Activated T-helper 1 cell treated with anti-CD3 and anti-CD28 coated beads, Interleukin-12 subunit alpha, Interleukin-12 subunit beta, Interleukin-2, Interleukin-4 antibody, amounts not matched to agents 30 ng/mL and 10 ng/mL and 1 ng/mL, durations not matched to agents 14 hours and 24 hours and 36 hours (primary cell): ENCODE measurements at regions of chr9 and their contacts with region 1.

Region 1: GRCh38 chr9:114738581-114739316 is 56.8 kb upstream of the TEX48 start:
- DNase-seq: peak; percentile 70
- H3K4me3 Mint-ChIP-seq: no peak overlapping the region
- H3K27ac Mint-ChIP-seq: peak overlapping the region; percentile 81
- H3K4me1 Mint-ChIP-seq: peaks cover 73% of the 10 kb centered on the region
- H3K27me3 Mint-ChIP-seq: no peaks in the 10 kb centered on the region

Region 2: GRCh38 chr9:114691046-114691955 is 47.4 kb before region 1 on chr9:
- intact Hi-C with region 1: loop called (anchors 1 kb)
- DNase-seq: peak; percentile 80
- H3K4me3 Mint-ChIP-seq: peak overlapping the region; percentile 69
- H3K27ac Mint-ChIP-seq: peak overlapping the region; percentile 98
- H3K4me1 Mint-ChIP-seq: peaks cover 93% of the 10 kb centered on the region
- H3K27me3 Mint-ChIP-seq: no peaks in the 10 kb centered on the region

Region 3: DNA sequence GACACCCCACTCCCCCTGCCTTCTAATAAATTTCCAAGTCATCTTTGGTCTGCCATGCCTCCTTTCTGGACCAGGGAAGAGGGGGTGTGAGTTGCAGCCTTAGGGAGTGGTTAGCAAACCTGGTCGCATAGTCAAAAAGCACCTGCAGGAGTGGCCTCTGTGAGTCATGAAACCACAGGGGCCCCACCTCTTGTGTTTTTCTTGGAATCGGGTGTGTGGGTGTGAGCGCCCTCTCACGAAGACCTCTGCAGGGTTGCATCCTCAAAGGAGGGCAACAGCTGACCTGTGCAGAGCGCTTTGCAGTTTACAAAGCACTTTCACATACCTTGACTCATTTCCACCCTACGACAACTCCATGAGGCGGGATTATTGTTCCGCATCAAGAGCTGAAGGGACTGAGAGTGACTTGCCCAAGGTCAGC is 19.9 kb before region 1 on chr9:
- intact Hi-C with region 1: loop called (anchors 1 kb)
- DNase-seq: peak; percentile 94
- H3K4me3 Mint-ChIP-seq: peak overlapping the region; percentile 28
- H3K27ac Mint-ChIP-seq: peak overlapping the region; percentile 98
- H3K4me1 Mint-ChIP-seq: peaks cover 82% of the 10 kb centered on the region
- H3K27me3 Mint-ChIP-seq: peaks cover 2% of the 10 kb centered on the region

Region 4: DNA sequence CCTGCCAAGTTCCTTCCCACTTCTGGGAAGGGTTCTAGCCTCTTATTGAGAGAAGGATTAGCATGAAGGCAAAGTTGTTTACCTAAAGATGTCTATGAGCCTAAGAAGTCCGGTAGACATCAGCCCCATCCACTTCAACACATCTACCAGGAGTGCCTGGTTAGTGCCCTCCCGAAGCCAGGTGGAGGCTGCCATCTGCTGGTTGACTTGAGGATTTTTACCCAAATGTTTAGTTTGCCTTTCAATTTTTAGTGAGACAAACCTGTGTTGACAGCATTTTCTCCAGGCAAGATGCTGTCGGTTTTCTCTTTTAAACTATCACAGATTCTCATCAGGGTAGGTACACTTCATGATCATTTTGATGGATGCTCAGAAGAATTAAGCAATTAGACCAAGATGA is 275.2 kb after region 1 on chr9:
- intact Hi-C with region 1: loop called (anchors 1 kb)
- DNase-seq: peak; percentile 73
- H3K4me3 Mint-ChIP-seq: no peak overlapping the region
- H3K27ac Mint-ChIP-seq: peak overlapping the region; percentile 52
- H3K4me1 Mint-ChIP-seq: peaks cover 72% of the 10 kb centered on the region
- H3K27me3 Mint-ChIP-seq: peaks cover 3% of the 10 kb centered on the region